Activated T-helper 1 cell treated with anti-CD3 and anti-CD28 coated beads, Interleukin-12 subunit alpha, Interleukin-12 subunit beta, Interleukin-2, Interleukin-4 antibody, amounts not matched to agents 30 ng/mL and 10 ng/mL and 1 ng/mL, durations not matched to agents 14 hours and 24 hours and 36 hours (primary cell): ENCODE measurements at regions of chr14 and their contacts with region 1.

Region 1: DNA sequence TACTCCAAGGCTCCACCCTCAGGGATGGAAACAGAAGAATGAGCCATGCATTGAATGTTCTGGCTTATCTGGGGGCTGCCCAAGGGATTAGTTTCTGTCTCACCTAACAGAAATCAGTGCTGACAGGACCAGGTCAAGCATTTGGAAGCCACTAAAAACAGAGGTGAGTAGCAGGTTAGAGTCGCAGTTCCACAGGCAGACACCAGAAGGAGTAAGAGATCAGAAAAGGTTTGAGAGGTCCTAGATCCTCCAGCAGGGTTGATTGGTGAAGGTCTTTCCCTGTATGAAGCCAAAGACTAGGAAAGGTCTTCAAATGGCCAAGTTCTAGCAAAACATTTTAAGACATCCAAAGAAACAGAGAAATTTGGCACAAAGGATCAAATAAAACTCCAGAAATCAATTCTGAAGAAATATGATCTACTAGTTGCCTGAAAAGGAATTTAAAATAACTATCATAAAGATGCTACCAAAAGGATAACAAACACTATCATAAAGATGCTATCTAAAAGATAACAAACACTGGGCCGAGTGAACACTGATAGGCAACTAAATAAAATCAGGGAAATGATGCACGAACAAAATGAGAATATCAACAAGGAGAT is 19.5 kb upstream of the TTC9 start:
- DNase-seq: peak; percentile 51
- H3K4me3 Mint-ChIP-seq: no peak overlapping the region
- H3K27ac Mint-ChIP-seq: no peak overlapping the region
- H3K4me1 Mint-ChIP-seq: no peaks in the 10 kb centered on the region
- H3K27me3 Mint-ChIP-seq: peaks cover 7% of the 10 kb centered on the region

Region 2: GRCh38 chr14:70425354-70425753 is 196.9 kb before region 1 on chr14:
- intact Hi-C with region 1: no loop called
- DNase-seq: no peak
- H3K4me3 Mint-ChIP-seq: no peak overlapping the region
- H3K27ac Mint-ChIP-seq: no peak overlapping the region
- H3K4me1 Mint-ChIP-seq: no peaks in the 10 kb centered on the region
- H3K27me3 Mint-ChIP-seq: peaks cover 6% of the 10 kb centered on the region

Region 3: DNA sequence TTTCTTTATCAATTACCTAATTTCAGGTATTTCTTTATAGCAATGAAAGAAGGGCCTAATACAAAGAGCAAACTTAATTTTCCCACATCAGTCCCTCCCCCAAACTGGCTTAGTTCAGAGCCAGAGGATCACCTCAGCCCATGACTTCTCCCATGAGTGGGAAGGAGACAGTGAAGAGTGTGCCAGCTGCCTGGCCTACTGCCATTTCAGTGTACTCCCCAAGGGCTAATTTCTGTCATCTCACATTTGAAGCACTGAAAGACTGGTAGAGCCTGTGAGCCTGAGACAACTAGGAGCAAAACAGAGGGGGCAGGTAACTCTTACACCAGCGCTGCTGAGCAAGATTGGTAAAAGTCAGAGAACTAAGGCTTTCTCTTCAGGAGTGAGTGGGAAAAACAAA is 58.3 kb before region 1 on chr14:
- intact Hi-C with region 1: no loop called
- DNase-seq: no peak
- H3K4me3 Mint-ChIP-seq: no peak overlapping the region
- H3K27ac Mint-ChIP-seq: no peak overlapping the region
- H3K4me1 Mint-ChIP-seq: no peaks in the 10 kb centered on the region
- H3K27me3 Mint-ChIP-seq: no peaks in the 10 kb centered on the region

Region 4: DNA sequence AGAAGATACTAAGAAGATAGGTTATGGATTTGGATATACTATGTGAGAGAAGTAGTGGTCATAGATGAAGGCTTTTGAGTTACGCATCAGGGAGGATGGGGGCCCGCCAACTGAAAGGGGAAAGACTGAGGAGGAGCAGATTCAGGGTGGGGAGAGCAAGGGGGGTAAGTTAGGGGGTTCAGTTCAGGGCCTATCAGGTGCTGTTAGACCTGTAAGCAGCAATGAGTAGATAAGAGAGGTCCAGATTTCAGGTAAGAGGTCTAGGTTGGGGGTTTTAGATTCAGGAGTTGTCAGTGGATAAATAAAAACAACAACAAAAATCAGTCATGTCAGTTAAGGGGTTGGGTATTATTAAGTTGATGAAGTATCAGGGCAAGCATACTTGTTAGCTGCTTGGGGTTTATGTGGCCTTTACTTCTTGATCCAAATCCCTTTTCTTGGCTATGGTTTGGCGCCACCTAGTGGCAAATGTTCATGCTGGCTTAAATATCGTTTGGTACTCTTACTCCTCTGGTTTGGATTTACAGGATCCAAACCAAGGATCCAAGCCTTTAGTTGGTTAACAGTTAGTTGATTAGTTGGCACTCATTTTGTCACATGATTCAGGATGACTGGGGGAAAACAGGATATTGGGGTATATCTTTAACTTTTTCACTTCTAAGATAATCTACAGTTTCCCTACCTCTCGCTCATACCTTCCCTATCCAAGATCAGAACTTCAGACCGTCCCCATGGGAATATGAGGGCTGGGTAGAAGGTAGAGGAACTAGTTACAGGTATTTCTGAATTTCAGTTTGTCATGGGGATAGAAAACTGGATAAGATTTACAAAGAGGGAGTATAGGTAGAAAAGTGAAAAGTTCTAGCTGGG is 350.1 kb after region 1 on chr14:
- intact Hi-C with region 1: loop called (anchors 1 kb)
- DNase-seq: peak; percentile 69
- H3K4me3 Mint-ChIP-seq: no peak overlapping the region
- H3K27ac Mint-ChIP-seq: no peak overlapping the region
- H3K4me1 Mint-ChIP-seq: peaks cover 14% of the 10 kb centered on the region
- H3K27me3 Mint-ChIP-seq: no peaks in the 10 kb centered on the region